Spleen (tissue), 13 donors: ENCODE measurements at regions of chr11 and their contacts with region 1.

Region 1: DNA sequence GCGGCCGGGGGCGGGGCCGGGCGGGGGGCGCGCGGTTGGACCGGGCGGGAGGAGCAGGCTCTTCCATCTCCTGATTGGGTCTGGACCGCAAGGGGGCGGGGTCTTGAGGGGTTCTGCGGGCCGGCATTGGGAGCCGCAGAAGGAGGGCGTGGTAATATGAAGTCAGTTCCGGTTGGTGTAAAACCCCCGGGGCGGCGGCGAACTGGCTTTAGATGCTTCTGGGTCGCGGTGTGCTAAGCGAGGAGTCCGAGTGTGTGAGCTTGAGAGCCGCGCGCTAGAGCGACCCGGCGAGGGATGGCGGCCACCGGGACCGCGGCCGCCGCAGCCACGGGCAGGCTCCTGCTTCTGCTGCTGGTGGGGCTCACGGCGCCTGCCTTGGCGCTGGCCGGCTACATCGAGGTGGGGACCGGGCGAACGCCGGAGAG is at the start of gene APLP2:
- DNase-seq: peak; percentile 99
- H3K4me3 ChIP-seq: peak within 1 kb of the TSS; percentile 67 to 91 (median 77)
- H3K27ac ChIP-seq: peak within 1 kb of the TSS; percentile 88 to 96 (median 94)
- H3K4me1 ChIP-seq: peaks cover 17 to 54% (median 30%) of the 10 kb centered on the region in 6 donors
- H3K27me3 ChIP-seq: no peaks in the 10 kb centered on the region
- CTCF ChIP-seq: no peak
- POLR2A ChIP-seq: peak; percentile 40 to 89 (median 83)
- total RNA-seq, gene APLP2: 140 to 248 (median 183) TPM

Region 2: DNA sequence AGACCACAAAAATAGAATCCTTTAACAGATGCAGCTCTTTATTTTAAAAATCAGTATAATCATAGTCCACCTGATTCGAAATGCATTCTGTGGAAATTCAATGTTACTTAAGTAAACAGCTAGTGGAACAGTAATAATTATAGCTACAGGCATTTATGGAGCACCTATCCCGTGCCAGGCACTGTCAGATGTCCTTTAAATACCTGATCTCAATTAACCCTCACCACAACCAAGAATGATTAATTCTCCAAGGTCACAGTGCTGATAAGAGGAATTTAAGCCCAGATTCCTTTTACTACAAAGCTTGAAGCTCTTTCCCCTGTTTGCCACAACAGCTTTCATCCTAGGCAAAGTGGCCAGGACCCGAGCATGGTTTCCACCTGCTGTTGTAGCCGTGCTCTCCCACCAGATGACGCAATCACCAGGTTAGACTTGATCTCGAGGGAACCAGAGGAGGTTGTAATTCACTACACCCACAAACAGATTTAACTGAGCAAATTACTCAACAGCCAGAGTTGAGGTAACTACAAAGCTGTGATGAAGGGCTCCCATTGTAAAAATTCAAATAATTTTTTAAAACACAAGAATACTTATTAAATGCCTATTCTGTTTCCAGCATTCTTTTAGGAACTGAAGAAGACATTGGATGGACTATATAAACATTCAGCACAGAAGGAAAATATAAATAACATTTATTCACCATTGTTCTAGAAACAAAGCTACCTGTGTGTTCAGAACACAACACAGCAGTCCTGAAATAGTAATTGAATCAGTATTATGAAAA is 77.3 kb before region 1 on chr11:
- intact Hi-C with region 1: no loop called
- DNase-seq: no peak
- H3K4me3 ChIP-seq: no peak overlapping the region
- H3K27ac ChIP-seq: no peak overlapping the region
- H3K4me1 ChIP-seq: peaks cover 0 to 36% (median 9%) of the 10 kb centered on the region in 6 donors
- H3K27me3 ChIP-seq: no peaks in the 10 kb centered on the region
- CTCF ChIP-seq: peak in 5 of 11 experiments; percentile 13 to 31 (median 17)
- POLR2A ChIP-seq: no peak

Region 3: GRCh38 chr11:130003717-130004001 is 66.0 kb before region 1 on chr11:
- intact Hi-C with region 1: loop called (anchors 2 kb)
- DNase-seq: no peak
- H3K4me3 ChIP-seq: peak overlapping the region; percentile 34 to 85 (median 70)
- H3K27ac ChIP-seq: peak overlapping the region; percentile 95 to 100 (median 99)
- H3K4me1 ChIP-seq: peaks cover 14 to 47% (median 28%) of the 10 kb centered on the region in 6 donors
- H3K27me3 ChIP-seq: no peaks in the 10 kb centered on the region
- CTCF ChIP-seq: no peak
- POLR2A ChIP-seq: no peak

Region 4: GRCh38 chr11:130124096-130124495 is 54.4 kb after region 1 on chr11:
- intact Hi-C with region 1: loop called (anchors 10 kb)
- DNase-seq: peak; percentile 90
- H3K4me3 ChIP-seq: peak overlapping the region in 1 of 8 donors; percentile 4
- H3K27ac ChIP-seq: peak overlapping the region in 7 of 8 donors; percentile 61 to 86 (median 82)
- H3K4me1 ChIP-seq: peaks cover 24 to 77% (median 50%) of the 10 kb centered on the region in 6 donors
- H3K27me3 ChIP-seq: no peaks in the 10 kb centered on the region
- CTCF ChIP-seq: peak in 1 of 11 experiments; percentile 18
- POLR2A ChIP-seq: no peak